ENCODE measurements at regions of chr5 and their contacts with region 1.

Region 1: DNA sequence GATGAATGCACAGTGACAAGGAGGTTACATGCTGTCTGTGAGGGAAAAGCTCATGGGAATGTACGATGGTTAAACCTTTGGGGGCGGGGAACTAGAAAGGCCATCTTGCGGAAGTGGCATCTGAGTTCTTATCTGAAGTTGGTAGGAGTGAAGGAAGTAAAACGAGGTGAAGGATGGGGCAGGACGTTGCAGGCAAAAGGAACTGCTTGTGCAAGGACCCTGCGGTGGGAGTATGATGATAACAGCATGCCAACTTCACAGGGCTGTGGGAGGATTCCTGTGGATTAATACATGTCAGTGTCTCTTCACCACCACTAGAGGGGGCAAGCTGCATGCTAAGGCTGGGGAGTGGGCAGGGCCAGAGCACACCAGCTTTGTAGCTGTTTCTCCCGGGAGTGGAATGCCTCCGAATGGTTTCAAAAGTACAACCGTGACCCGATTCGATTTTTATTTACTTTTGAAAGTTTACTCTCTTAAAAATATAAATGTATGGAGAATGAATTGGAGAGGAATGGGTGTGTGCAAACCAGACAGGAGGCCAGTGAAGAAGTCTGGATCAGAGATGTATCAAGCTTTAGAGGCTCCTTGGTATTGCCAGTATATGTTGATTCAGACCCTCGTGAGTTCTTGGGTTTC is 62.5 kb downstream of the CYFIP2 start:
- DNase-seq: peak; percentile 66 to 69 (median 67)
- H3K4me3 ChIP-seq: no peak overlapping the region
- H3K4me3 Mint-ChIP-seq: peak overlapping the region; percentile 3 to 69 (median 58)
- H3K27ac ChIP-seq: peak overlapping the region; percentile 30
- H3K27ac Mint-ChIP-seq: peak overlapping the region; percentile 72 to 96 (median 89)
- H3K4me1 ChIP-seq: peaks cover 27% of the 10 kb centered on the region
- H3K4me1 Mint-ChIP-seq: peaks cover 23 to 44% (median 26%) of the 10 kb centered on the region in 4 donors
- H3K27me3 ChIP-seq: no peaks in the 10 kb centered on the region
- H3K27me3 Mint-ChIP-seq: no peaks in the 10 kb centered on the region

Region 2: GRCh38 chr5:156981481-156981880 is 346.9 kb before region 1 on chr5:
- CTCF ChIA-PET with region 1: no interaction called
- POLR2A ChIA-PET with region 1: no interaction called
- intact Hi-C with region 1: no loop called
- DNase-seq: no peak
- H3K4me3 ChIP-seq: no peak overlapping the region
- H3K4me3 Mint-ChIP-seq: no peak overlapping the region
- H3K27ac ChIP-seq: no peak overlapping the region
- H3K27ac Mint-ChIP-seq: no peak overlapping the region
- H3K4me1 ChIP-seq: no peaks in the 10 kb centered on the region
- H3K4me1 Mint-ChIP-seq: no peaks in the 10 kb centered on the region
- H3K27me3 ChIP-seq: no peaks in the 10 kb centered on the region
- H3K27me3 Mint-ChIP-seq: peaks cover 0 to 3% of the 10 kb centered on the region in 2 donors

Region 3: DNA sequence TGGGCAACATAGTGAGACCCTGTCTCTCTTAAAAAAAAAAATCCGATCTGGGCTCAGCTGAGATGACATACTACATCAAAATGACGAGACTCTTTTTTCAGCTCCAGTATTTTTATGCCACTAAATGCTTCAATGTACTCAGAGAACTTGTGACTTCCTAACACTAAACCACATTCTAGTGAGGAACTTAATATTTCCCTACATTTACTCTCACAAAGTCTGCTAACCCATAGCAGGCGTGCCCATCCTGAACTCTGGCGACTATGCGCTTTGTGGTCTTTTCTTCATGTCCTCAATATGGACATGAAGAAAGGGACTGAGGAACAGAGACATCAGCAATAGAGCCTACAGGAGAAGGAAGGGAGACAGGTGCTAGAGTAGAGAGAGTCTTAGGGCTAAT is 106.4 kb before region 1 on chr5:
- CTCF ChIA-PET with region 1: no interaction called
- POLR2A ChIA-PET with region 1: no interaction called
- intact Hi-C with region 1: no loop called
- DNase-seq: no peak
- H3K4me3 ChIP-seq: no peak overlapping the region
- H3K4me3 Mint-ChIP-seq: peak overlapping the region in 7 of 8 donors; percentile 72 to 86 (median 79)
- H3K27ac ChIP-seq: peak overlapping the region; percentile 63
- H3K27ac Mint-ChIP-seq: peak overlapping the region; percentile 90 to 97 (median 93)
- H3K4me1 ChIP-seq: peaks cover 98% of the 10 kb centered on the region
- H3K4me1 Mint-ChIP-seq: peaks cover 67 to 85% (median 78%) of the 10 kb centered on the region in 4 donors
- H3K27me3 ChIP-seq: no peaks in the 10 kb centered on the region
- H3K27me3 Mint-ChIP-seq: no peaks in the 10 kb centered on the region

Region 4: GRCh38 chr5:157303667-157304327 is 24.6 kb before region 1 on chr5:
- CTCF ChIA-PET with region 1: interaction called, 27 read pairs
- POLR2A ChIA-PET with region 1: interaction called, 5 read pairs
- intact Hi-C with region 1: no loop called
- DNase-seq: peak; percentile 54 to 72 (median 66)
- H3K4me3 ChIP-seq: peak overlapping the region; percentile 27 to 33
- H3K4me3 Mint-ChIP-seq: peak overlapping the region; percentile 78 to 94 (median 86)
- H3K27ac ChIP-seq: peak overlapping the region; percentile 23
- H3K27ac Mint-ChIP-seq: peak overlapping the region; percentile 79 to 94 (median 93)
- H3K4me1 ChIP-seq: peaks cover 60% of the 10 kb centered on the region
- H3K4me1 Mint-ChIP-seq: peaks cover 48 to 69% (median 60%) of the 10 kb centered on the region in 4 donors
- H3K27me3 ChIP-seq: no peaks in the 10 kb centered on the region
- H3K27me3 Mint-ChIP-seq: no peaks in the 10 kb centered on the region

Region 5: DNA sequence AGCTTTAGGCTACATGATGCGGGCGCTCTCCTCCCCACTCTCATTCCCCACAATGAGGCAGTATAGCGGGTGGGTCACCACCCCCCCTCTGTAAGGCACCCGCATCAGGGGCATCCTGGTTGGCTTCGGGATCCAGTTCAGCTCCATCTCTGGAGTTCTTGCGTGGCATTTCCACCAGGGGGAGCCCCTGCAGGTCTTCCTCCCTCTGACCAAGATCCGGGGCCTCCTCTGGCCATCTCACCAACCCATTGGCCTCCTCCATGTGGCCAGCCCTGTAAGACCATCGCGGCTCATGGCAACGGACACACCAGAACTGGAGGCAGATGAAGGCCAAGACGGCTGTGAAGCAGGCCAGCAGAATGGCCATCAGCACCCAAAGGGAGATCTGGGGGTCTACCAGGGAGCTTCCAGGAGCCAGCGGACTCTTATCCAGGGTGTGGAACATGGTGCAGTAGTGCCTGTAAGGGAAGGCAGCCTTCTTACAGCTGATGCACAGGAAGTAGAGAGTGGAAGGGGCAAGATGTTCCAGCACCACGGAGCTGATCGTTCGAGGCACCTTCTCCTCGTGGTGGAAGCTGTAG is 14.5 kb after region 1 on chr5:
- CTCF ChIA-PET with region 1: interaction called, 29 read pairs
- POLR2A ChIA-PET with region 1: no interaction called
- intact Hi-C with region 1: loop called (anchors 2 kb)
- DNase-seq: peak in 2 of 5 donors; percentile 15 to 21
- H3K4me3 ChIP-seq: no peak overlapping the region
- H3K4me3 Mint-ChIP-seq: peak overlapping the region in 1 of 8 donors; percentile 8
- H3K27ac ChIP-seq: no peak overlapping the region
- H3K27ac Mint-ChIP-seq: peak overlapping the region in 5 of 7 donors; percentile 18 to 89 (median 41)
- H3K4me1 ChIP-seq: peaks cover 15% of the 10 kb centered on the region
- H3K4me1 Mint-ChIP-seq: peaks cover 19 to 29% (median 24%) of the 10 kb centered on the region in 4 donors
- H3K27me3 ChIP-seq: no peaks in the 10 kb centered on the region
- H3K27me3 Mint-ChIP-seq: no peaks in the 10 kb centered on the region

Region 6: GRCh38 chr5:157354800-157355199 is 26.4 kb after region 1 on chr5:
- CTCF ChIA-PET with region 1: interaction called, 15 read pairs
- POLR2A ChIA-PET with region 1: interaction called, 3 read pairs
- intact Hi-C with region 1: no loop called
- DNase-seq: no peak
- H3K4me3 ChIP-seq: no peak overlapping the region
- H3K4me3 Mint-ChIP-seq: no peak overlapping the region
- H3K27ac ChIP-seq: no peak overlapping the region
- H3K27ac Mint-ChIP-seq: peak overlapping the region in 3 of 7 donors; percentile 13 to 48 (median 14)
- H3K4me1 ChIP-seq: peaks cover 4% of the 10 kb centered on the region
- H3K4me1 Mint-ChIP-seq: peaks cover 21 to 29% (median 23%) of the 10 kb centered on the region in 4 donors
- H3K27me3 ChIP-seq: no peaks in the 10 kb centered on the region
- H3K27me3 Mint-ChIP-seq: no peaks in the 10 kb centered on the region

Region 7: GRCh38 chr5:157398305-157398704 is 69.9 kb after region 1 on chr5:
- CTCF ChIA-PET with region 1: no interaction called
- POLR2A ChIA-PET with region 1: no interaction called
- intact Hi-C with region 1: no loop called
- DNase-seq: no peak
- H3K4me3 ChIP-seq: no peak overlapping the region
- H3K4me3 Mint-ChIP-seq: no peak overlapping the region
- H3K27ac ChIP-seq: no peak overlapping the region
- H3K27ac Mint-ChIP-seq: no peak overlapping the region
- H3K4me1 ChIP-seq: no peaks in the 10 kb centered on the region
- H3K4me1 Mint-ChIP-seq: peaks cover 0 to 3% (median 2%) of the 10 kb centered on the region in 4 donors
- H3K27me3 ChIP-seq: no peaks in the 10 kb centered on the region
- H3K27me3 Mint-ChIP-seq: no peaks in the 10 kb centered on the region

Region 8: GRCh38 chr5:157476702-157477408 is 148.5 kb after region 1 on chr5:
- CTCF ChIA-PET with region 1: interaction called, 8 read pairs
- POLR2A ChIA-PET with region 1: no interaction called
- intact Hi-C with region 1: loop called (anchors 5 kb)
- DNase-seq: peak in 4 of 5 donors; percentile 19 to 36 (median 28)
- H3K4me3 ChIP-seq: no peak overlapping the region
- H3K4me3 Mint-ChIP-seq: no peak overlapping the region
- H3K27ac ChIP-seq: no peak overlapping the region
- H3K27ac Mint-ChIP-seq: peak overlapping the region in 5 of 7 donors; percentile 20 to 70 (median 50)
- H3K4me1 ChIP-seq: peaks cover 35% of the 10 kb centered on the region
- H3K4me1 Mint-ChIP-seq: peaks cover 23 to 45% (median 29%) of the 10 kb centered on the region in 4 donors
- H3K27me3 ChIP-seq: no peaks in the 10 kb centered on the region
- H3K27me3 Mint-ChIP-seq: no peaks in the 10 kb centered on the region

Region 9: GRCh38 chr5:157978061-157978460 is 649.7 kb after region 1 on chr5:
- CTCF ChIA-PET with region 1: no interaction called
- POLR2A ChIA-PET with region 1: no interaction called
- intact Hi-C with region 1: no loop called
- DNase-seq: no peak
- H3K4me3 ChIP-seq: no peak overlapping the region
- H3K4me3 Mint-ChIP-seq: no peak overlapping the region
- H3K27ac ChIP-seq: no peak overlapping the region
- H3K27ac Mint-ChIP-seq: no peak overlapping the region
- H3K4me1 ChIP-seq: no peaks in the 10 kb centered on the region
- H3K4me1 Mint-ChIP-seq: no peaks in the 10 kb centered on the region
- H3K27me3 ChIP-seq: no peaks in the 10 kb centered on the region
- H3K27me3 Mint-ChIP-seq: peaks cover 9 to 13% of the 10 kb centered on the region in 2 donors

Measured in CD4-positive, alpha-beta memory T cell (primary cell).